A673 (cell line): ENCODE measurements at regions of chr2 and their contacts with region 1.

Region 1: DNA sequence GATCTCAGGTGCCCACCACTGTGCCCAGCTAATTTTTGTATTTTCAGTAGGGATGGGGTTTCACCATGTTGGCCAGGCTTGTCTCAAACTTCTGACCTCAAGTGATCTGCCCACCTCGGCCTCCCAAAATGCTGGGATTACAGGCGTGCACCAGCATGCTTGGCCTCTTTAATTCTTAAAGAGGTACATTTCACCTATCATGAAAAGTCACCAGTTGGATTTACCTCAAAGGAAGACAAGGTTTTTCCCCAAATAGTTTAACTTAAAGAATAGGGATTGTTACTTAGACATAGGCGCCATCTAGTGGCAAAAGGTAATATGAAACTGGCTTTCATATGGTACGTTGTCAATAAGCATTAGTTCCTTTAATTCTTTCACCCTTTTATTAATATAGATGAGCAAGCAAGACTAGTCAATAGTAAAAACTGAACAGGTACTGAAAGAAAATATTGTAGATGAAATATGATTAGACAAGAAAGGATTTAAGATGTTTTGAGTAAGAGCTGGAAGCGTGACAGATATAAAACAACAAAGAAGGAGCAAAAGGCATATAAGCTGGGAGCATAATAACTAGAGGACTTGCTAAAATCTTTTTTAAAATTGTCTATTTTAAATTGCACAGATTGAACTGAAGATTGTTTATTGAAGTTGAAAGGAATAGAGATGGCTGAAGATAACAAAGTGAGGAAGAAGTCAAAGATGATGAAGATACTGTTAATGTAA is 35.0 kb upstream of the PSMD14 start:
- DNase-seq: peak; percentile 75
- H3K4me3 ChIP-seq: no peak overlapping the region
- H3K27ac ChIP-seq: no peak overlapping the region
- H3K4me1 ChIP-seq: no peaks in the 10 kb centered on the region
- H3K27me3 ChIP-seq: no peaks in the 10 kb centered on the region
- CTCF ChIP-seq: peak; percentile 73

Region 2: GRCh38 chr2:161063157-161063954 is 209.8 kb before region 1 on chr2:
- CTCF ChIA-PET with region 1: no interaction called
- POLR2A ChIA-PET with region 1: no interaction called
- intact Hi-C with region 1: loop called (anchors 10 kb)
- DNase-seq: peak; percentile 84
- H3K4me3 ChIP-seq: no peak overlapping the region
- H3K27ac ChIP-seq: no peak overlapping the region
- H3K4me1 ChIP-seq: peaks cover 6% of the 10 kb centered on the region
- H3K27me3 ChIP-seq: no peaks in the 10 kb centered on the region
- CTCF ChIP-seq: peak; percentile 93

Region 3: DNA sequence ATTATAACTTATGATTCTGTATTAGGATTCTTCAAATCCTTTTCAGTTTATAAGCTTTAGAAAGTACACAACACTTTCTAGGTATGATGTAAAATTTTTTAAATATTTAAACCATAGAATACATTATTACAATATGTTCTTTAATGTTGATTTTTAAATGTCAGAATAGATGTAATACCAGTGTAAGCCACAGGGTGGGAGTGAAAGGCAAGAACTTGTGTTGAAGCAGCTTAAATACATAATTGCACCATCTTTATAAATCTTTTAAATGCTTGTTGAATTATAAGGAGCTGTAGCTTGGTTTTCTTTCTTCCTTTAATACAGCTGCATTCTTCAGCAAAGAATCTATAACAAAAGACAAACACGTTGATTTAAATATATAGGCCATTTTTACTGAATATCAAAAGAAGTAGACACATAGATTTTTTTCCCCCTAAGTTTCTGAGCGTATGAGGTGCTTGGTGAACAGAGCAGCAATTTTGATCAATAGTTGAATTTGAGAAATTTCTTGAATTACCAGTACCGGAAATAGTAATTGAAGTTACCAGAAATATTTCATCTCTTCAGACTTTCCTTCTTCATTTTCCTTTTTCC is 50.0 kb before region 1 on chr2:
- CTCF ChIA-PET with region 1: interaction called, 3 read pairs
- POLR2A ChIA-PET with region 1: no interaction called
- intact Hi-C with region 1: loop called (anchors 1 kb)
- DNase-seq: peak; percentile 63
- H3K4me3 ChIP-seq: no peak overlapping the region
- H3K27ac ChIP-seq: no peak overlapping the region
- H3K4me1 ChIP-seq: peaks cover 6% of the 10 kb centered on the region
- H3K27me3 ChIP-seq: no peaks in the 10 kb centered on the region
- CTCF ChIP-seq: peak; percentile 78